ENCODE measurements at regions of chr1 and their contacts with region 1.

Region 1: GRCh38 chr1:109277434-109278204 is 5.3 kb downstream of the PSRC1 start:
- DNase-seq: peak; percentile 88
- ATAC-seq: peak; percentile 39

Region 2: DNA sequence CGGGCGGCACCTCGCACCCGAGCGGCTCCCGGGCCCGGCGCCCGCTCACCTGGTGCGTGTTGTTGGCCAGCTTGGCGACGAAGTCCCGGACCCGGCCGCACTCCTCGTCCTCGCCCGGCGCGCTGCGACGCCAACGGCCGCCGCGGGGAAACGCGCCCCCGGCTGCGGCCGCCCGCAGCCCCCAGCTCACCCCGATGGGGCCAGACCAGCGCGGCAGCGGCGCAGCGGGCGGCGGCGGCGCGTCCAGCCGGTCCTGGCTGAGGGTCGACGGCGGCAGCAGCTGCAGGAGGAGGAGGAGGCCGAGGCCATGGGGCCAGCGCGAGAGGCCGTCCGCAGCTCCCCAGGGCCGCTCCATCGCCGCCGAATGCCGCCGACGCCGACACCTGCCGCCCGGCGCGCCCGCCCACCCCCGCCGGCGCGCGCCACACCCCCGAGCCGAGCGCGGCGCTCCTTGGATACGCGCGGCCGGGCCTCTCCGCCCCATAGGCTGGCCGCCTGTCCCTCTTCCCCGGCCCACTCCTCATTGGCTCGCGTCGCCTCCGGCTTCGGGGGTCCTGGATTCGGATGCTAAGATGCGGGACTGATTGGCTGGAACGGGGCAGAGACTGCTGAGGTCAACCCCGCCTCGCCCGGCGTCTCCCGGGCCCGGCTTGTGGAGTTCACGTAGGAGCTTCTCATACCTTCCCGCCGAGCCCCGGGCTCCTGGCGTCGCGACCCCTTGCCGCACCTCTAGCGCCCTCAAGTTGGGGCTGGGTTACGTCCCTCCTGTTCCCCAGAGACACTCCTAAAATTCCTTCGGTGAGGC is 120.1 kb after region 1 on chr1 and contains the start of gene SORT1:
- intact Hi-C with region 1: loop called (anchors 5 kb)
- DNase-seq: peak; percentile 88
- ATAC-seq: peak; percentile 95
- total RNA-seq, gene SORT1: 111 TPM